ENCODE measurements at regions of chr20 and their contacts with region 1.

Region 1: GRCh38 chr20:37564388-37565133 is 36.9 kb upstream of the BLCAP start:
- DNase-seq: peak in 38 of 42 donors; percentile 10 to 81 (median 57)

Region 2: DNA sequence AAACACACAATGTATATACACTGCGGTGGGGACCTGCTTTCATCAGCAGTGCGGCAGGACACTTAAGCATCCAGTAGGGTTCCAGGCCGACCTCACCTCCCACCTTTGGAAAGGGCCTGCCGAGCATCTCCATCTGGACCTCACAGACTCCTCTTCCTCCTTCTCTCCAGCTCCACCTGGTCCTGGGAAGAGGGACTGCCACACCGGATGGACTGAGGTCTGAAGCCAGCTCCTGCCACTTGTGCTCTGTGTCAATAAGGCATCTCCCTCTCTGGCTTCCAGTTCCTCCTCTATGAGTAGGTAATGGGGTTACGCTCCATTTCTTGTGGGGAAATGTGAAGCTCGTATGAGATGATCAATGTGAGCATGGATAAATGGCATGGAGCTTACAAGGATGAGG is 62.6 kb before region 1 on chr20:
- intact Hi-C with region 1: no loop called
- DNase-seq: no peak

Region 3: GRCh38 chr20:37990571-37991151 is 426.1 kb after region 1 on chr20:
- intact Hi-C with region 1: loop called (anchors 10 kb)
- DNase-seq: peak in 2 of 42 donors; percentile 16 to 53

Region 4: GRCh38 chr20:38472513-38473372 is 908.2 kb after region 1 on chr20 and contains the start of gene RALGAPB:
- intact Hi-C with region 1: no loop called
- DNase-seq: peak; percentile 90 to 99 (median 98)

Measured in head of caudate nucleus (tissue), 42 donors.